Naive thymus-derived CD8-positive, alpha-beta T cell (primary cell): ENCODE measurements at regions of chr10 and their contacts with region 1.

Region 1: DNA sequence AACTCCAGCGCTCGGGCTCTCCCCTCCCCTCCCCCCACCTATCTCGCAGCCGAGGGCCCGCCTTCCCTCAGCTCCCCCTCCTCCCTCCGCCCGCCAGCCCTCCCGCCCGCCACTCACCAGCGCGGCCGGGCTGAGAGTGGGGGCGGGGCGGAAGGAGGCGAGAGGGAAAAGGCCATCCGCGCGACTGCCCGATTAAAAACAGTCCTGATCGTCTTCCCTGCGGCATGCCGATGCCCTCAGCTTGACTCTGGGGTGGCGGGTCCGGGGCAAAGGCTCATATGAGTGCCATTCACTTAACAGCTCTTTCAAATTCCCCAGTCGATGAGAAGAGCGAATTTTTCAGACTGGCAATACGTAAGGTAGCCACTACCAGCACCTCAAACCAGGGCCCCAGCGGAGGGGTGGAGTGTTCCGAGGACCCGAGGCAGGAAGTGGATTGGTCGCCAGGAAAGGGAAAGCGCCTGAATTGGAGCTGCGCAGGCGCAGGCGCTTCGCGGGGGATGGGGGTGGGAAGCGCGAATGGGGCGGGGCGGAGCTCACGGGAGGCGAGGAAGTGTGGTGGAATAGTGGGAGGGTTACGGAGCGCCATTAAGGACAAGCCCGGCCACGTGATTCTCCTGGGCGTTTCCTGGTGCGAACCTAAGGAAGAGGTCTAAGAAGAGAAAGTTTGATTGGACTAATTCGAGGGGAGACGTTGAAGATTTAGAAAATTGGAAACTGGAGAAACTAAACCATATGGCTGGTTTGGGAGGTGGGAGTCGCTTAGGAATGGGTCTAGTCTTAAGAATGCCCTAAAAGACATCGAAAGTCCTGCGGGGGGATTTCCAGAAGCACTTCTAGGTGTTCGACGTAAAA is at the start of gene UPF2:
- DNase-seq: peak; percentile 94 to 99 (median 96)
- ATAC-seq: peak; percentile 81 to 87
- H3K4me3 Mint-ChIP-seq: peak within 1 kb of the TSS; percentile 94 to 100 (median 98)
- H3K27ac Mint-ChIP-seq: peak within 1 kb of the TSS; percentile 99 to 100 (median 100)
- H3K4me1 Mint-ChIP-seq: peaks cover 15 to 47% (median 38%) of the 10 kb centered on the region in 4 donors
- H3K27me3 Mint-ChIP-seq: peaks cover 0 to 5% (median 3%) of the 10 kb centered on the region in 5 donors
- polyA plus RNA-seq, gene UPF2: 10.9 to 14.4 (median 12.3) TPM

Region 2: DNA sequence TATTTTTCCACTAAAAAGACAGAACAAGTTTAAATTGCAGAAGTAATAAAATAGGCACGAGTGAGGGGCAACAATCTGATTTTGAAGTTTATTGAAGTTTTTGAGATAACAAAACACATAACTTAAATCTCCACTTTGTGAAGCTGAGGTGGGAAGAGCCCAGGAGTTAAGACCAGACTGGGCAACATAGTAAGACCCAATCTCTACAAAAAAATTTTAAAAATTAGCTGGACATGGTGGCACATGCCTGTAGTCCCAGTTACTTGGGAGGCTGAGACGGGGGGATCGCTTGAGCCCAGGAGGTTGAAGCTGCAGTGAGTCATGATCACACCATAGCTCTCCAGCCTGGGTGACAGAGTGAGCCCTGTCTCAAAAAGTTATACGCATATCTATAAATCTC is 11.6 kb before region 1 on chr10:
- POLR2A ChIA-PET with region 1: interaction called, 10 read pairs
- DNase-seq: no peak
- ATAC-seq: no peak
- H3K4me3 Mint-ChIP-seq: peak overlapping the region in 1 of 10 donors; percentile 18
- H3K27ac Mint-ChIP-seq: peak overlapping the region in 3 of 10 donors; percentile 6 to 24 (median 8)
- H3K4me1 Mint-ChIP-seq: peaks cover 15 to 40% (median 33%) of the 10 kb centered on the region in 4 donors
- H3K27me3 Mint-ChIP-seq: no peaks in the 10 kb centered on the region

Region 3: DNA sequence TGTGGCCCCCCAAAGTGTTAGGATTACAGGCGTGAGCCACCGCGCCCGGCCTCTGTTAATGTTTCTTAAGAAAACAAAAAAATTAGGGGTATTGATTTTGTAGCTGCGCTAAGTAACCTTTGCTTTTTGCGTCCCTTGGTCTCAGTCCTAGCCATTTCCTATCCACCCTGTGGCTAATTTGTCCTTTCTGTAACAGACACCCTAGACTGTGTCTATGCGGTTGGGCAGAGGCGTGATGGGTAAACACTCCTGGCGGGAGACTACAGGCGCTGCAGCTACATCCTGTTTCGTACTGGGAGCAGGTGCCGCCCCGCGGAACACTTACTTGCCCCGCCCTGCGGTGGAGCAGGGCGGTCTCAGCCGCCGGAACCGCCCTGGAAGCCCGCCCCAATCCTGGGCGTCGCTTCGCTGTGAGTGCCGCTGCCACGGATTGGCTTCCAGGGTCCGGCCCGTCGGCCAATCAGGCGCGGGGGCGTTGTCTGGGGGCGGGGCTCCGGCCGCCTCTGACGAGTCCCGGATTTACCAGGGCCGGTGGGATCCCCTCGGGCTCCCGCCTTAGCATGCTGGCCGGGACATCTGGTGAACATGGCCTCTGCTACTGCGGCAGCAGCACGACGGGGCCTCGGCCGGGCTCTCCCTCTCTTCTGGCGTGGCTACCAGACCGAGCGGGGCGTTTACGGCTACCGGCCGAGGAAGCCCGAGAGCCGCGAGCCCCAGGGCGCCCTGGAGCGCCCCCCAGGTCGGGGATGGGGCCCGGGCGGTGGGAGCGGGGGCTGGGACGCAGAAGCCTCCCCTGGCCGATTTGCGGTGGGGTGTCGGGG is 25.6 kb after region 1 on chr10 and contains the start of gene DHTKD1:
- POLR2A ChIA-PET with region 1: interaction called, 33 read pairs
- DNase-seq: peak; percentile 95 to 99 (median 98)
- ATAC-seq: peak; percentile 96 to 98
- H3K4me3 Mint-ChIP-seq: peak within 1 kb of the TSS; percentile 73 to 93 (median 87)
- H3K27ac Mint-ChIP-seq: peak within 1 kb of the TSS; percentile 73 to 97 (median 96)
- H3K4me1 Mint-ChIP-seq: peaks cover 4 to 32% (median 22%) of the 10 kb centered on the region in 4 donors
- H3K27me3 Mint-ChIP-seq: no peaks in the 10 kb centered on the region
- polyA plus RNA-seq, gene DHTKD1: 5.4 to 8.0 (median 6.6) TPM

Region 4: GRCh38 chr10:12195603-12196506 is 152.8 kb after region 1 on chr10 and contains the starts of genes CDC123 and NUDT5:
- POLR2A ChIA-PET with region 1: interaction called, 14 read pairs
- DNase-seq: peak; percentile 73 to 92 (median 80)
- ATAC-seq: peak; percentile 93
- H3K4me3 Mint-ChIP-seq: peak within 1 kb of the TSS; percentile 94 to 100 (median 98)
- H3K27ac Mint-ChIP-seq: peak within 1 kb of the TSS; percentile 95 to 100 (median 99)
- H3K4me1 Mint-ChIP-seq: peaks cover 23 to 67% (median 63%) of the 10 kb centered on the region in 4 donors
- H3K27me3 Mint-ChIP-seq: no peaks in the 10 kb centered on the region
- polyA plus RNA-seq, gene CDC123: 83.1 to 91.0 (median 83.6) TPM
- polyA plus RNA-seq, gene NUDT5: 45.0 to 52.7 (median 49.5) TPM

Region 5: DNA sequence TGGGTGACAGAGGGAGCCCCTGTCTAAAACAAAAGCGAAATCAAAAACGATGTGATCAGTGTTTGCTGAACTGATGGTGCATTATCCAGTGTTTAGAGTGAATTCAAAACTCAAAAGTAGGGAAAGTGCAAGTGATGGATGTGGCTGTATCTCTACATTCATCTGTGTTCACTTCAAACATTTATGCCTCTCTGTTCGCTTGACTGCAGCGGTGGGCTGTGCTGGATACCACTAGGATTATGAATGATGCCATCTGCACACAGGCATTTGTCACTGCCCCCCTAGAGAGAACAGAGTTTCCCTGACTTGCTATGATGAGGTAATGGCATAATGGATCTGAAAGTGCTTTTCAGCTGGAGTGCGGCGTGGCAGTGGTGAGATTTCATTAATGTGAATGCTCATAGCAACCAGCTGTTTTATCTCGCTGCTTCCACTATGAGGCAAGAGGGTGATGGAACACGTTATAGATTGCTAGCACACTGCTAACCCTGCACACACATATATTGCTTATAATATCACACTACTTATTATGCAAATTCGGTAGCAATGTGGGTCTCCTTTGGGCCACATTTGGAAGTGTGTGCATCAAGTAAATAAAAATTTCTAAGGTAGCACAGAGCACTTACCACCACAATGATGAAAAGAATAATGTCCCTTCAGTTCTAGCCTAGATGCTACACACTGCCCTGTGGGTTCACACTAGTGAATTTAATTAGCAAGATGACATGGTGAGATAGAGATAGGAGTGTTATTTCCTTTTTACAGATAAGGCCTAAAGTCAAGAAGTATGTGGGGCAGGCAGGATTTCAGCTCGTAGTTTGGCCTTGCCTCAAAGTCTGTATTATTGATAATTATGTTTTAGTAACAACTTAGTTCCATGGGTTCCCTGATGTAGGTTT is 471.0 kb after region 1 on chr10:
- POLR2A ChIA-PET with region 1: no interaction called
- DNase-seq: no peak
- ATAC-seq: no peak
- H3K4me3 Mint-ChIP-seq: no peak overlapping the region
- H3K27ac Mint-ChIP-seq: peak overlapping the region in 2 of 10 donors; percentile 35 to 40
- H3K4me1 Mint-ChIP-seq: peaks cover 13 to 47% (median 26%) of the 10 kb centered on the region in 4 donors
- H3K27me3 Mint-ChIP-seq: no peaks in the 10 kb centered on the region